ENCODE measurements at regions of chr16 and their contacts with region 1.

Region 1: DNA sequence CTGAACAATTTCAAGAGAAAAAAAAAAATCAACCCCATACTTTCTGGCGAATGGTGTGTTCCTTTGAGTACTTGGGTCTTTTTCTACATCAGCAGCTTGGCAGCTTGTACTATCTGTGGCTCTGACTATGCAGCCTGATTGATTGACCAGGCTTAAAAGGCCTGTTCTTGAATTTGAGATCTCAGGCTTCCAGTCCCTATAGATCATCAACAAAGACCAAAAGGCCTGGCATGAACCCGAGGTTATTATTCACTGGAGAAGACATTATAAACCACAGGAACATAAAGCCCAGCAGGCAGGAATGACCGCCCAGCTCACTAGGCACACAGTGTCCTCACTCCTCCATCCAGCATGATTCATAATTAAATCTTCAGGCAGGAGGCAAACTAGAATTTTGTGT is 32.1 kb upstream of the CDH3 start:
- DNase-seq: no peak
- ATAC-seq: no peak
- H3K4me3 ChIP-seq: no peak overlapping the region
- H3K27ac ChIP-seq: no peak overlapping the region
- H3K4me1 ChIP-seq: no peaks in the 10 kb centered on the region
- H3K27me3 ChIP-seq: no peaks in the 10 kb centered on the region
- CTCF ChIP-seq: no peak

Region 2: GRCh38 chr16:68436581-68436980 is 176.4 kb before region 1 on chr16:
- intact Hi-C with region 1: no loop called
- DNase-seq: no peak
- ATAC-seq: no peak
- H3K4me3 ChIP-seq: no peak overlapping the region
- H3K27ac ChIP-seq: no peak overlapping the region
- H3K4me1 ChIP-seq: no peaks in the 10 kb centered on the region
- H3K27me3 ChIP-seq: peaks cover 0 to 32% (median 11%) of the 10 kb centered on the region in 7 donors
- CTCF ChIP-seq: peak in 2 of 9 donors; percentile 21 to 27

Region 3: GRCh38 chr16:68564367-68564985 is 48.5 kb before region 1 on chr16:
- intact Hi-C with region 1: loop called in 1 of 10 experiments (anchors 5 kb)
- DNase-seq: no peak
- ATAC-seq: no peak
- H3K4me3 ChIP-seq: no peak overlapping the region
- H3K27ac ChIP-seq: no peak overlapping the region
- H3K4me1 ChIP-seq: no peaks in the 10 kb centered on the region
- H3K27me3 ChIP-seq: no peaks in the 10 kb centered on the region
- CTCF ChIP-seq: no peak